Activated naive CD4-positive, alpha-beta T cell treated with anti-CD3 and anti-CD28 coated beads for 36 hours (primary cell): ENCODE measurements at regions of chr6 and their contacts with region 1.

Region 1: DNA sequence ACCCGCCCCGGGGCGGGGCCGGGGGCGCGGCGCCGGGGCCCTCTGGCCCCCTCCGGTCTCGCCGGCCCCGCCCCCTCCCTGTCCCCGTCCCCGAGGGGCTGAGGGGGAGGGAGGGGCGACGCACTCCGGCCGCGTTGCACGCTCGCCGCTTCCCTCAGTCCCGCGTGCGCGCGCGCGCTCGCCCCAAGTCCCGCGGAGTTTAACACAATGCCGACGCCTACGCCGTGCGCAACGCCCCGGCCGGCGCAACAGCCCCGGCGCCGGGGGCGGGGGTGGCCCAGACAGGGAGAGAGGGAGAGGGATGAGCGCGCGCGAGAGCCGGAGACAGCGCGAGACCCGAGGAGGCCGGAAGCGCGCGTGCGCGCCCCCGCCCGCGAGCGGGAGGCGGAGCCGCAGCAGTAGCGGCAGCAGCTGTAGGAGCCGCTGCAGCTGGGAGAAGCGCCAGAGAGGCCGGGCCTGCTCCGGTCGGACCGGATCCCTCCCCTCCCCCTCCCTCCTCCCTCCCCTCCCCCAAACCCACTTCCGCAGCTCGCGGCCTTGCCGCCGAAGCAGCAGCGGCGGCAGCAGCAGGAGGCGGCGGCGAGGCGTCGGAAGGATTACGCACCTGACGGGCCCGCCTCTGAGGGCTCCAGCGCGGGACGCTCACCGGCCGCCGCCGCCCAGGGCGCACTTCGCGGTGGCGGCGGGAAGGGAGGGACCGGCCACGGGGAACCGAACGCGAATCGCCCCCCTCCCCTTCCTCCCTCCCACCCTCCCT is 905 bp downstream of the ZBTB2 start:
- DNase-seq: peak; percentile 97
- H3K4me3 Mint-ChIP-seq: peak overlapping the region; percentile 95
- H3K27ac Mint-ChIP-seq: peak overlapping the region; percentile 70
- H3K4me1 Mint-ChIP-seq: peaks cover 54% of the 10 kb centered on the region
- H3K27me3 Mint-ChIP-seq: no peaks in the 10 kb centered on the region

Region 2: DNA sequence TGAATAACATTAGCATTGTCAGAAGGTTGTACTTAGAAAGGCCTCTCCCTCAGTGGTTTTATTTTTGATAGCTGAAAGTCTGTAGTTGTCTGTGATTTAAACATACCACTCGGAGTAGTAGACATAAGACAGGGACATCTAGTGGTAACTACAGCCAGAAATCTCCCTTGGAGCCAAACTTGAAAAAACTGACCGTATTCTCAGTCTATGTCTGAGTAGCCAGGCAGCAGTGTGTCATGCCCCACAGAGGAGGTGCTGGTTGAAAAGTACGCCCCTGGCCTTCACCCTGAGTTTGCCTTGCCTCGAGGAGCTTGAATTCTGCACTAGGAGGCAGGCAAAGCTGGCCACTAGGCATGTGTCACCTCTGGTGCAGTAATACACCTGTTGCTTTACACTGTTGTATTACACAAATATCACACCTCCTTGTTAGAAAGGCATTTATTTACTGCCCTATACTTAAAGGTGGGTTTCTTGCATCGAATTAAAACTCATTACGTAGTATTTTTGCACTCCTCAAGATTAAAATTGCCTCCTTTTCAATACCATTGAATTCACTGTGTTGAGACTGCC is 19.9 kb before region 1 on chr6:
- CTCF ChIA-PET with region 1: no interaction called
- intact Hi-C with region 1: loop called (anchors 1 kb)
- DNase-seq: no peak
- H3K4me3 Mint-ChIP-seq: no peak overlapping the region
- H3K27ac Mint-ChIP-seq: no peak overlapping the region
- H3K4me1 Mint-ChIP-seq: peaks cover 33% of the 10 kb centered on the region
- H3K27me3 Mint-ChIP-seq: no peaks in the 10 kb centered on the region

Region 3: GRCh38 chr6:151400454-151400853 is 10.0 kb after region 1 on chr6:
- CTCF ChIA-PET with region 1: interaction called, 28 read pairs
- intact Hi-C with region 1: loop called (anchors 1 kb)
- DNase-seq: no peak
- H3K4me3 Mint-ChIP-seq: no peak overlapping the region
- H3K27ac Mint-ChIP-seq: peak overlapping the region; percentile 69
- H3K4me1 Mint-ChIP-seq: peaks cover 57% of the 10 kb centered on the region
- H3K27me3 Mint-ChIP-seq: no peaks in the 10 kb centered on the region

Region 4: GRCh38 chr6:151440930-151441329 is 50.5 kb after region 1 on chr6:
- CTCF ChIA-PET with region 1: no interaction called
- intact Hi-C with region 1: no loop called
- DNase-seq: no peak
- H3K4me3 Mint-ChIP-seq: no peak overlapping the region
- H3K27ac Mint-ChIP-seq: no peak overlapping the region
- H3K4me1 Mint-ChIP-seq: peaks cover 38% of the 10 kb centered on the region
- H3K27me3 Mint-ChIP-seq: no peaks in the 10 kb centered on the region

Region 5: GRCh38 chr6:151475653-151476523 is 85.4 kb after region 1 on chr6:
- CTCF ChIA-PET with region 1: no interaction called
- intact Hi-C with region 1: loop called (anchors 5 kb)
- DNase-seq: peak; percentile 64
- H3K4me3 Mint-ChIP-seq: no peak overlapping the region
- H3K27ac Mint-ChIP-seq: no peak overlapping the region
- H3K4me1 Mint-ChIP-seq: peaks cover 6% of the 10 kb centered on the region
- H3K27me3 Mint-ChIP-seq: no peaks in the 10 kb centered on the region

Region 6: DNA sequence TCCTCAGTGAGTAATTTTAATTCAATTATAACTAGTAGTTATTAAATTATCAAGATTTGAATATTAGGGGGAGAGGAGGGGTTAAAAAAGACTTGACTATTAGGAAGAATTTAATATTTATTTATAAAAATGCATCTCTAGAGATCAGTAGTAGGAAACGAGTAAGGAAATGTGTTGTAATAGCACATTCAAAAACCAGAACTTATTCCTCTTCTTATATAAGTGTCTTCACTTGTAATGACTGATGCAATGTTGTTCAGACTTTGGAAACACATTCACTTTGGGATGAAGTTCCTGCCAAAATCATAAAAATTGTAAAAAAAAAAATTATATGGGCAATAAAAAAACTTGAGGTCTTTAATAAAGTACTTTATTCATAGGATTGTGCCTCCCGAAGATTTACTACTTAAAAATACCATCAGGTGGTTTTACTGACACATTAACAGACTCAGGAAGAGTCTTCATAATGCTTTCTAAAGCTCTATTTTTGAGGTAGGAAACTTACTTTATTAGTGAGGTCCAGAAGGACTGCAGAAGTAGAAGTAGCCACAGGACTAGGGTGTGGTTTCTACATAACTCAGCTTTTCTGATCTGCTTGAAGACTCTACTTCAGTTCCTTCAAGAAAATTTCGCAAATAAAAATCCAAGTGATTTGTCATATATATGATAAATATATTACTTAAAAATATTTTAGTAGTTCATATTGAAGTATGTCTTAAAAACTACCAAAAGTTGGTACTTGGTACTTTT is 163.1 kb after region 1 on chr6:
- CTCF ChIA-PET with region 1: no interaction called
- intact Hi-C with region 1: no loop called
- DNase-seq: no peak
- H3K4me3 Mint-ChIP-seq: no peak overlapping the region
- H3K27ac Mint-ChIP-seq: no peak overlapping the region
- H3K4me1 Mint-ChIP-seq: no peaks in the 10 kb centered on the region
- H3K27me3 Mint-ChIP-seq: no peaks in the 10 kb centered on the region

Region 7: GRCh38 chr6:152170705-152171667 is 780.5 kb after region 1 on chr6:
- CTCF ChIA-PET with region 1: no interaction called
- intact Hi-C with region 1: loop called (anchors 1 kb)
- DNase-seq: peak; percentile 82
- H3K4me3 Mint-ChIP-seq: peak overlapping the region; percentile 60
- H3K27ac Mint-ChIP-seq: peak overlapping the region; percentile 89
- H3K4me1 Mint-ChIP-seq: peaks cover 50% of the 10 kb centered on the region
- H3K27me3 Mint-ChIP-seq: no peaks in the 10 kb centered on the region

Region 8: GRCh38 chr6:152982768-152983636 is 1592.5 kb after region 1 on chr6 and contains the start of gene FBXO5:
- CTCF ChIA-PET with region 1: no interaction called
- intact Hi-C with region 1: loop called (anchors 2 kb)
- DNase-seq: peak; percentile 97
- H3K4me3 Mint-ChIP-seq: peak within 1 kb of the TSS; percentile 99
- H3K27ac Mint-ChIP-seq: peak within 1 kb of the TSS; percentile 100
- H3K4me1 Mint-ChIP-seq: peaks cover 44% of the 10 kb centered on the region
- H3K27me3 Mint-ChIP-seq: no peaks in the 10 kb centered on the region
- total RNA-seq, gene FBXO5: 61.4 to 62.3 TPM